Stomach (tissue), 19 donors: ENCODE measurements at regions of chr3 and their contacts with region 1.

Region 1: GRCh38 chr3:97793420-97794019 is 28.3 kb upstream of the CRYBG3 start:
- DNase-seq: peak in 1 of 2 donors; percentile 82
- H3K4me3 ChIP-seq: no peak overlapping the region
- H3K27ac ChIP-seq: no peak overlapping the region
- H3K4me1 ChIP-seq: no peaks in the 10 kb centered on the region
- H3K27me3 ChIP-seq: no peaks in the 10 kb centered on the region
- CTCF ChIP-seq: peak in 5 of 7 experiments; percentile 64 to 83 (median 79)
- EP300 ChIP-seq: no peak
- POLR2A ChIP-seq: no peak

Region 2: GRCh38 chr3:97687734-97688133 is 105.8 kb before region 1 on chr3:
- intact Hi-C with region 1: no loop called
- DNase-seq: no peak
- H3K4me3 ChIP-seq: no peak overlapping the region
- H3K27ac ChIP-seq: no peak overlapping the region
- H3K4me1 ChIP-seq: no peaks in the 10 kb centered on the region
- H3K27me3 ChIP-seq: no peaks in the 10 kb centered on the region
- CTCF ChIP-seq: no peak
- EP300 ChIP-seq: no peak
- POLR2A ChIP-seq: no peak

Region 3: GRCh38 chr3:97952280-97952679 is 158.8 kb after region 1 on chr3:
- intact Hi-C with region 1: no loop called
- DNase-seq: peak in 1 of 2 donors; percentile 32
- H3K4me3 ChIP-seq: no peak overlapping the region
- H3K27ac ChIP-seq: peak overlapping the region in 4 of 5 donors; percentile 15 to 62 (median 50)
- H3K4me1 ChIP-seq: peaks cover under 1 to 12% (median 5%) of the 10 kb centered on the region in 4 donors
- H3K27me3 ChIP-seq: no peaks in the 10 kb centered on the region
- CTCF ChIP-seq: no peak
- EP300 ChIP-seq: no peak
- POLR2A ChIP-seq: no peak

Region 4: GRCh38 chr3:98025392-98025945 is 231.9 kb after region 1 on chr3:
- intact Hi-C with region 1: loop called (anchors 2 kb)
- DNase-seq: no peak
- H3K4me3 ChIP-seq: no peak overlapping the region
- H3K27ac ChIP-seq: no peak overlapping the region
- H3K4me1 ChIP-seq: peaks cover 0 to 17% (median 8%) of the 10 kb centered on the region in 4 donors
- H3K27me3 ChIP-seq: no peaks in the 10 kb centered on the region
- CTCF ChIP-seq: no peak
- EP300 ChIP-seq: no peak
- POLR2A ChIP-seq: no peak